GM13976 (cell line): ENCODE measurements at regions of chr17 and their contacts with region 1.

Region 1: DNA sequence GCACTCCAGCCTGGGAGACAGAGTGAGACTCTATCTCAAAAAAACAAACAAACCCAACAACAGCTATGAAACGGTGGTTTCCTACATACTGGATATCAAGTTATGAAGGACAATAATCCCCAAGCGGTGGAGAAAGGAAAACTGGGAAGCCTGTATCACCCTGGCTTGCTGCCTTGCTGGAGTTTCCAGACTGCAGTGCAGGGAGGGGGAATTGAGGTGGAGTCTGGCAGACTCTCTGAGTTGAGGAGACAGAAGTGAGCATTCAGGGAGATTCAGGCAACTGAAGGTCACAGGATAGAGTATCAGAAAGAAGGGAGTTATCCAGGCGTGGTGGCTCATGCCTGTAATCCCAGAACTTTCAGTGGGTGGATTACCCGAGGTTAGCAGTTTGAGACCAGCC is 11.9 kb downstream of the QRICH2 start:
- DNase-seq: no peak
- CTCF ChIP-seq: no peak

Region 2: DNA sequence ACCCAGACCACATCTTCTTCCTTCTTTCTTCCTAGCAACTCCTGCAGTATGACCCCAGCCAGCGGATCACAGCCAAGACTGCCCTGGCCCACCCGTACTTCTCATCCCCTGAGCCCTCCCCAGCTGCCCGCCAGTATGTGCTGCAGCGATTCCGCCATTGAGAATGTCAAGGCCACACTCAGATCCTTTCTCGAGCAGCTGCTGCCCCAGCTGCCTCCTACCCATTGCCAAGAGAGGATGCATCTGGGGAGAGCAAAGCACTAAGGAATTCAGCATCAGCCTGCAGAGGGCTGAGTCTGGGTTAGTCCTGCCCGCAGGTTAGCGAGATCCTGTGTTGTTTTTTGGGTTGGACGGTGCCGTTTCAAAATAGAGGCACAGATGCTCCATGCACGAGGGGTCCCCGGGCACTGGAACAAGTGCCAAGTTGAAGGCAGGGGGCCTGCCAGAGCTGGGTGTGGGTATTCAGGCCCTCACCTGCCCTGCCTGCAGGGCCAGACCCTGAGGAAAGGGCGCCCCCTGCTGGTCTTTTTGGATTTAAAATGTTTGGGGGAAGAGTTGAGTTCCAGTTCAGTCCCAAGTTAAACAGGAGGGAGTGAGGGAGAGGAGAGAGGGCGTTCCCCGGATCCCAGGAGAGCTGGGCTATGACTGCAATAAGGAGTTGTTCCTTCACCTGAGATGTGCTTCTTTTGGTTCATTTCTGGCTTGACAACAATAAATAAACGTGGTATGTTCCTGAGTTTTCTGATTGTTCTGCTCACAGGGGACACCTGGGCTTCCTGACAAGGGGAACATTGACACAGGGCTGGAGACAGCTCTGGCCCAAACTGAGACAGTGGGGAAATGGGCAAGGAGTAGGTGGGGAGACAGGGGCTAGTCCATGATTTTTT is 290.7 kb before region 1 on chr17:
- in situ Hi-C with region 1: loop called (anchors 10 kb)
- DNase-seq: peak; percentile 88
- CTCF ChIP-seq: peak; percentile 71